Adrenal gland (tissue), 19 donors: ENCODE measurements at regions of chr9 and their contacts with region 1.

Region 1: DNA sequence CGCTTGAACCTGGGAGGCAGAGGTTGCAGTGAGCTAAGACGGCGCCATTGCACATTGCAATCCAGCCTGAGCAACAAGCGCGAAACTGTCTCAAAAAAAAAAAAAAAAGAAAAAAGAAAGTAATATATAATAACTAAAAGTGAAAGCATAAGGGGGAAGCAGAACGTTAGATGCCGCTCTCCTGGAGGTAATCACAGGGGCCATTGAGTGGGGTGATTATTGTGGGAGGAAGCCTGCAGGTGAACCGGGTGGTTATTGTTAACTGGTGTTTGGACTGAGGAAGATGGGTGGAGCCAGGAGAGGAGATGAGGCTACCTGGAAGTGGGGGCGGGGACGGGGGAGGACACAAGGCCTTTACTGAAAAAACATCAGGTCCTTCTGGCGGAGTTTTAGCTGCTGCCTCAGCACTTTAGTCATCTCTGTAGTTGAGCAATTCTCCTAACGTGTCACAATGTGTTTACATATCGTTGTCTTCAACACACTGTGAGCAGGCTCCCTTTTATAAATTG is 5.3 kb upstream of the TJP2 start:
- DNase-seq: peak in 2 of 7 donors; percentile 16 to 21
- H3K4me3 ChIP-seq: no peak overlapping the region
- H3K27ac ChIP-seq: no peak overlapping the region
- H3K4me1 ChIP-seq: peaks cover 6 to 18% of the 10 kb centered on the region in 2 donors
- H3K27me3 ChIP-seq: no peaks in the 10 kb centered on the region
- CTCF ChIP-seq: no peak
- POLR2A ChIP-seq: no peak

Region 2: DNA sequence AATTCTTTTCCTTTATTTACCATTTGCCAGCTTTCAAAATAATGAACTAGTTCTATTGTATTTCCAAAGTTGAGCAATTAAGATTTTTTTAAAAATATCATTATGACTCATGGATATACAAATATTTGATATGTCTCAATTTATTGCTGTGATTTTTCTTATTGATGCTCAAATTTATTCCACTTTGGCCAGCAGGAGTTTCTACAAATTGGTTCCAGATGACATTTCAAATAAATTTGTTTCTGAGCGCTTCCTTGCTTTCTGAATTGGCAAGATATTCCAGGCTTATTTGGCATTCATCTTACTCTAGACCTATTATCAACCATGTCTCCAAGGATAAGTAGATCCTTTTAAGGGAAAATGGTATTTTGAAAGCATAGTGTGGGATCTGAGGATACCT is 53.1 kb before region 1 on chr9:
- intact Hi-C with region 1: loop called in 1 of 2 experiments (anchors 10 kb)
- DNase-seq: no peak
- H3K4me3 ChIP-seq: no peak overlapping the region
- H3K27ac ChIP-seq: no peak overlapping the region
- H3K4me1 ChIP-seq: no peaks in the 10 kb centered on the region
- H3K27me3 ChIP-seq: no peaks in the 10 kb centered on the region
- CTCF ChIP-seq: no peak
- POLR2A ChIP-seq: no peak